SK-N-SH (cell line): ENCODE measurements at regions of chr15 and their contacts with region 1.

Region 1: DNA sequence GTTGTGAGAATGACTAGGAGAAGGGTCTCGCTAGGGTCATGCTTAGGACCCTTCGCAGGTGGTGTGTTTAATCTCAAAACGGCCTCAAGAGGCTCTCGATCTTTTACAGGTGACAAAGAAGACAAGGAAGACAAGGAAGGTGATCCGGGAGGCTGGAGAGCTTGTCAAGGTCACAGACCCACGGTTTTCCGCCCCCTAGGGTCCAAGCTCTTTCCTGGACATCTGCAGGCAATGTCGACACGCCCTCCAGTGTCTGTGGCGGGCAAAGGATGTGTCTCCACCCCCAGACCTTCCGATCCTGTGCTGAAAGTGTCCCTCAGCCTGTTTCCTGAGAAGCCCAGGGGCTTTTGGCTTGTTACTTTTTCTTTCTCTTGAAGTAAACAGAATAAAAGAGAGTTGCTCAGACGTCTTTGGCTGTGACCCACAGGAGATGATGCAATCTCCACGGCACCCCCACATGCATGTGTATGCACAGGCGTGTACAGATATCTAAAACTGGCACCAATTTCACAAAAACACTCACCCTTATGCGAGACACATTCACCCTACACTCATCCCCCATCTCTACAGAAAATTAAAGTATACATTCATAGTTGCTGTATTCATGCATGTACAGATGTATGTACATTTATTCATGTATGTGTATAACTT is 108.8 kb downstream of the KLF13 start:
- DNase-seq: peak; percentile 91
- H3K4me3 ChIP-seq: no peak overlapping the region
- H3K27ac ChIP-seq: no peak overlapping the region; a peak in 1 of 4 replicates
- H3K4me1 ChIP-seq: peaks cover 0 to 20% of the 10 kb centered on the region in 2 experiments; a peak in 1 of 4 replicates
- H3K27me3 ChIP-seq: no peaks in the 10 kb centered on the region; the same call in 1 of the 2 replicates
- CTCF ChIP-seq: peak; percentile 66
- EP300 ChIP-seq: no peak
- RAD21 ChIP-seq: peak; percentile 94

Region 2: DNA sequence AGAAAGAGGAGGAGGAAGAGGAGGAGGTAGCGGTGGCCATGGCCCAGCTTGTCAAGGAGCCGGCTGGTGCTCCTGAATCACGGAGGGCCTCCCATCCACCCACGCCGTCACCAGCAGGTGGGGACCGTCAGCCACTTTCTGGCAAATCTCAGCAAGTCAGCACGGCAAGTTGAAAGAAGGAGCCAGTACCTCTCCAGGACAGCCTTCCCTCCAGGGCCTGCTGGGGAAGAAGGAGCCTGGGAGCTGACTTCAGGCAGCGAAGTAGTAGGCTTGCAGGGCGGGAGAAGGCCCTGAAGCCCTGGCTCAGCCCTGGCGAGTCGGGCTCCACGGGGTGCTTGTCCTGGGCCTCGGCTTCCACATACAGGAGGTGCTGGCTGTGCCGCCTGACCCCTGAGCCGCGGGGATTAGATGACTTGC is 234.6 kb before region 1 on chr15:
- CTCF ChIA-PET with region 1: interaction called, 19 read pairs
- POLR2A ChIA-PET with region 1: no interaction called
- DNase-seq: peak; percentile 59
- H3K4me3 ChIP-seq: 0 out of 4 replicates have a peak overlapping the region, but pooled peaks of 1 of the 2 experiments have one; percentile 19
- H3K27ac ChIP-seq: no peak overlapping the region
- H3K4me1 ChIP-seq: peaks cover 0 to 7% of the 10 kb centered on the region in 2 experiments; a peak in 1 of 4 replicates
- H3K27me3 ChIP-seq: peaks cover 8% of the 10 kb centered on the region; the same call in 1 of the 2 replicates
- CTCF ChIP-seq: no peak
- EP300 ChIP-seq: no peak
- RAD21 ChIP-seq: peak; percentile 71

Region 3: DNA sequence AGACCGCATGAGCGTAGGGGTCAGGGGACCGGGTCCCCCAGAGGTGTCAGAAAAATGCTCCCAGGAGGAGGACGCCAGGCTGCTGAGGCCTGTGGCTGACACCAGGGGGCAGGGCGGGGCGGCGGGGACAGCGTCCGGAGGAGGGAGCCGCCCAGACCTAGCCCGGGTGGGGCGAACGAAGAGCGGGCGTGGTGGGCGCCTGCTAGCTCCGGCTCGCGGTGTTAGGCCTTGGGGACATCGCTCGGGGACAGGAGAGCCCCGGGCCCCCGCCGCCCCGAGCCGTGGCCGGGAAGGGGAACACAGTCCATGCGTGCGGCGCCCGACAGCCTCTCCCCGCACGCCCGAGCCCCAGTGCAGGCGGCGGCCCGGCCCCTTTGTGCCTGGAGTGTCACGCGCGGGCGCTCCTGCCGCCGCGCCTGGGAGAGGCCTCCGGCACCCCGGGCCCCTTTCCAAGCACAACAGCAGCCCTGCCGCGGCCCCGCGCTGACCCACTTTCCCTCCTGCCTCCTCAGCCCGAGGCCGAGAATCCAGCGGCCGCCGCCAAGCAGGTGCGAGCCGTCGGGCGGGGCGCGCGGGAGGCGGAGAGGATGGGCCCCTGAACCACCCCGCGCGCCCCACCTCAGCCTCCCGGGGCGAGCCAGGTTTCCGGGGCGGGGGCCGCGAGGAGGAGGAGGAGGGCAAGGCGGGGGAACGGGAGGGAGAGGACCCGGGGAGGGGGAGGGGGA is 219.7 kb before region 1 on chr15:
- CTCF ChIA-PET with region 1: interaction called, 29 read pairs
- POLR2A ChIA-PET with region 1: no interaction called
- DNase-seq: peak; percentile 94
- H3K4me3 ChIP-seq: peak overlapping the region; percentile 55 to 60
- H3K27ac ChIP-seq: peak overlapping the region in 1 of 2 experiments; percentile 72; a peak in 1 of 4 replicates
- H3K4me1 ChIP-seq: peaks cover 0 to 32% of the 10 kb centered on the region in 2 experiments; a peak in 2 of 4 replicates
- H3K27me3 ChIP-seq: no peaks in the 10 kb centered on the region
- CTCF ChIP-seq: peak; percentile 74
- EP300 ChIP-seq: no peak
- RAD21 ChIP-seq: peak; percentile 74

Region 4: DNA sequence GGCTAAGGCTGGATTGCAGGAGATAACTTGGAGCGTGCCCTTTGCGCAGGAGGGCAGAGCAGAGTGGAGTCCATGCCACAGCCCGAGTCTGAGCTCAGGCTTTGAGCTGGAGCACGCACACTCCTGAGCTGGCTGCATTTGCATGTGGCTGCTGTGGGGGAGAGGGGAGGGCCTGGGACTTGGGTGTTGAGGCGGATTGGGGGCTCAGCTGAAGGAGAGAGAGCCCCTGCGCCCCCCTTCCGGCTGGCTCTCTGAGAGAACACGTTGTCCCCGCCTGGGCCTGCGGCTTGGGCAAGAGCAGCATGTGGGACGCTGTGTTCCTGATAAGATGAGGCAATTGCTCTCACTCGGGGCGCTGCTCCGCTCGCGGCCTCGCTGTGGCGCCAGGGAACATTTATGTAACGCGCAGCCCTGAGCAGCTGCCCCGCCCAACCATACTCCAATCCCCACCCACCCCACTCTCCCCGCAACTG is 69.7 kb before region 1 on chr15:
- CTCF ChIA-PET with region 1: interaction called, 19 read pairs
- POLR2A ChIA-PET with region 1: interaction called, 4 read pairs
- DNase-seq: peak; percentile 78
- H3K4me3 ChIP-seq: no peak overlapping the region
- H3K27ac ChIP-seq: 0 out of 4 replicates have a peak overlapping the region, but pooled peaks of 1 of the 2 experiments have one; percentile 30
- H3K4me1 ChIP-seq: peaks cover 0 to 65% of the 10 kb centered on the region in 2 experiments; a peak in 2 of 4 replicates
- H3K27me3 ChIP-seq: no peaks in the 10 kb centered on the region
- CTCF ChIP-seq: no peak
- EP300 ChIP-seq: no peak
- RAD21 ChIP-seq: peak; percentile 41

Region 5: DNA sequence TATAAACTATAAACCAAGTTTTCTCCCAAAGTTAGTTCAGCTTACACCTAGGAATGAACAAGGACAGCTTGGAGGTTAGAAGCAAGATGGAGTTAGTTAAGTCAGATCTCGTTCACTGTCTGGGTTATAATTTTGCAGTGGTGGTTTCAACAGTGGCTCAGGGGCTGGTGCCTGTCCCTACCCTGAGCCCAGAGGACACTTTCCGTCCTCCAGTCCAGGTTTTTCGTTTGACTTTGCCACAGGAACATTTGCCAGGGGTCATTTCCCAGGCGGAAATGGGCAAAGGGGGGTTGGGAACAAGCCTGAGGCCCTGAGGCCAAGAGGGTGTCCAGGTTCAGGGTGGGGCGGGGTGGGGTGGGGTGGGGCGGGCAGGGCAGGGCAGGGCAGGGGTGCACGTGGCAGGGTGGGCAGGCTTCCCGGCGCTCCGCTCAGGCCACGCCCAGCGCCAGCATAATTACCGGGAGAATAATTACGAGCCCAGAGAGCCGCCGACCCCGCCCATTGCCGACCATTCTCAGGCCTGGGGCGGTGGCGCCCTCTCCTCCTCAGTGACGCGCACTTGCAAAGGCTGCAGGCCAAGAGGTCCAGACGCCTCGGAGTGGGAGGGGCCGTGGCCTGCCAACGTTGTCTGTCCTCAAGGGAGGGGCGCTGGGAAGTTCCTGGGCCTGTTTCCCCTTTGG is 38.4 kb before region 1 on chr15:
- CTCF ChIA-PET with region 1: interaction called, 28 read pairs
- POLR2A ChIA-PET with region 1: interaction called, 5 read pairs
- DNase-seq: peak; percentile 82
- H3K4me3 ChIP-seq: peak overlapping the region in 1 of 2 experiments; percentile 25; a peak in 2 of 4 replicates
- H3K27ac ChIP-seq: peak overlapping the region in 1 of 2 experiments; percentile 98; a peak in 3 of 4 replicates
- H3K4me1 ChIP-seq: peaks cover 3 to 54% of the 10 kb centered on the region in 2 experiments; a peak in 2 of 4 replicates
- H3K27me3 ChIP-seq: no peaks in the 10 kb centered on the region
- CTCF ChIP-seq: no peak
- EP300 ChIP-seq: 0 out of 4 replicates have a peak, but pooled peaks of 1 of the 2 experiments have one; percentile 1
- RAD21 ChIP-seq: peak; percentile 48

Region 6: GRCh38 chr15:31448635-31448979 is 13.2 kb after region 1 on chr15:
- CTCF ChIA-PET with region 1: no interaction called
- POLR2A ChIA-PET with region 1: no interaction called
- DNase-seq: no peak
- H3K4me3 ChIP-seq: no peak overlapping the region
- H3K27ac ChIP-seq: no peak overlapping the region
- H3K4me1 ChIP-seq: no peaks in the 10 kb centered on the region
- H3K27me3 ChIP-seq: no peaks in the 10 kb centered on the region
- CTCF ChIP-seq: no peak
- EP300 ChIP-seq: no peak
- RAD21 ChIP-seq: no peak

Region 7: DNA sequence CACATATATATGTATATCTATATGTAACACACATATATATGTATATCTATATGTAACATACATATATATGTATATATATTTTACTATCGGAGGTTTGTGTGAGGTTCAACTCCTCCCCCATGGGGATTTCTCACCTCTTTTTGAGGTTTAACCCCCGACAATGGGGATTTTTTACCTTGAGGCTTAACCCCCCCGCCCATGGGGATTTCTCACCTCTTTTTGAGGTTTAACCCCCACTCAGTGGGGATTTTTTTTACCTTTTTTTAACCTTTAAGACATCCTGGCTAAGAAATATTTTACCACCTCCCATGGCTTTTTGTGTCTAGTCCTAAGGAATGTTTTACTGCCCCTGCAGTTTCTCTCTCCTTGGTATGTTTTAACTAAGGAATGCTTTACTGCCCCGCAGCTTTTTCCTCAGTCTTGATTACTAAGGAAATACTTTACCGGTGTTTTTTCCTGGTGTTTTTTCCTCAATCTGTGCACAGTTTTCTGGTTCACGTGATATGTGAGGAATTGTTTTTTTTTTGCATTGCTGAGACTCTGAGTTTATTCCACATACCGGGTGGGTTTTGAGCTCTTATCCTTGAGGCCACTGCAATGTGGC is 76.4 kb after region 1 on chr15:
- CTCF ChIA-PET with region 1: no interaction called
- POLR2A ChIA-PET with region 1: no interaction called
- DNase-seq: no peak
- H3K4me3 ChIP-seq: no peak overlapping the region
- H3K27ac ChIP-seq: no peak overlapping the region
- H3K4me1 ChIP-seq: peaks cover 0 to 2% of the 10 kb centered on the region in 2 experiments; a peak in 1 of 4 replicates
- H3K27me3 ChIP-seq: no peaks in the 10 kb centered on the region
- CTCF ChIP-seq: no peak
- EP300 ChIP-seq: no peak
- RAD21 ChIP-seq: no peak